Activated naive CD4-positive, alpha-beta T cell treated with anti-CD3 and anti-CD28 coated beads for 36 hours (primary cell): ENCODE measurements at regions of chr1 and their contacts with region 1.

Region 1: DNA sequence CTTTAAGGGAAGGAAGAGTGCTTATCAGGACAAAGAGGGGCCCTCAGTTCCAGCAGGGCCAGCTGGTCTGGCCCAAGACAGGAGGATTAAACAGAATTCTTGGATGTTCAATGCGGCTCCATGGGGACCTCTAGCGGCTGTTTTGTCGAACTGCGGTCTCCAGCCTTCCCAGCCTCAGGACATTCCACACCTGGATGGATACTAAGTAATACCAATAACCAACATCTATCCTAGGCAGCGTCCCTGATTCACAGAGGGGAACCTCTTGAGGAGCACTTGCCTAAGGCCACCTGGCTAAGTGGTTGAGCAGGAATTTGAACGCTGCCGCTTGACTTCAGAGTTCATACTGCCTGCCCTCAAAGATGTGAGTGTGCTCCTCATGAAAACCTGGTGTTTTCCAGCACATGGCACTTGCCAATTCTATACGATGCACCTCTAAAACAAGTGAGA is 15.5 kb upstream of the CD247 start:
- DNase-seq: peak; percentile 78
- H3K4me3 Mint-ChIP-seq: no peak overlapping the region
- H3K27ac Mint-ChIP-seq: no peak overlapping the region
- H3K4me1 Mint-ChIP-seq: peaks cover 4% of the 10 kb centered on the region
- H3K27me3 Mint-ChIP-seq: peaks cover 2% of the 10 kb centered on the region

Region 2: DNA sequence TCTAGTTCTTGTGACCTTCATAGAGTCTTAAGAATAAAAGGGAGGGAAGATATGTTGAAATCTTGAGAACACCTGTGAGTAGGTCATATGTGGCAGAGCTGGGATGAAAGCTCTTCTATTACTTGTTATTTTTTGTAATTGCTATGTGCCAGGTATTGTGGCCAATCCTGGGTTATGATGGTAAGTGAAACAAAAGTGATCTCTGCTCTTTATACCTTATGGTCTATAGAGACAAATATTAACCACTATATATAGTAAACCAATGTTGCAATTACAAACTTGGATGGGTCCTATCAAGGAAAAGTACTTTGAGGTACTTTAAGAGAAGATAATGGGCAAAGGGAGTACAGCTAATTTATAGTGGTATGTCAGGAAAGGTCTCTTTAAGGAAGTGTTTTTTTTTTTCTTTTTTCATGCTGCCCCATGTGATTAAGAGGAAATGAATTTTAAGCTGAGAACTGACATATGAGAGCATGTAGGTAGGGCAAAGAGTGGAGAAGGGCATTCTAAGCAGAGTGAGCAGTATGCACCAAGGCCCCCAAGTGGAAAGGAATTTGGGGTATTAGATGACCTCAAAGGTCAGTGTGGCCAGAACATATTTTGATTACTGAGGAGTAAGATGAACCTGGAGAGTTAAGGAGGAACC is 269.9 kb before region 1 on chr1:
- CTCF ChIA-PET with region 1: interaction called, 74 read pairs
- intact Hi-C with region 1: loop called (anchors 1 kb)
- DNase-seq: no peak
- H3K4me3 Mint-ChIP-seq: no peak overlapping the region
- H3K27ac Mint-ChIP-seq: no peak overlapping the region
- H3K4me1 Mint-ChIP-seq: peaks cover 20% of the 10 kb centered on the region
- H3K27me3 Mint-ChIP-seq: no peaks in the 10 kb centered on the region

Region 3: GRCh38 chr1:167409183-167409582 is 124.7 kb before region 1 on chr1:
- CTCF ChIA-PET with region 1: interaction called, 13 read pairs
- intact Hi-C with region 1: no loop called
- DNase-seq: no peak
- H3K4me3 Mint-ChIP-seq: no peak overlapping the region
- H3K27ac Mint-ChIP-seq: no peak overlapping the region
- H3K4me1 Mint-ChIP-seq: peaks cover 15% of the 10 kb centered on the region
- H3K27me3 Mint-ChIP-seq: no peaks in the 10 kb centered on the region

Region 4: DNA sequence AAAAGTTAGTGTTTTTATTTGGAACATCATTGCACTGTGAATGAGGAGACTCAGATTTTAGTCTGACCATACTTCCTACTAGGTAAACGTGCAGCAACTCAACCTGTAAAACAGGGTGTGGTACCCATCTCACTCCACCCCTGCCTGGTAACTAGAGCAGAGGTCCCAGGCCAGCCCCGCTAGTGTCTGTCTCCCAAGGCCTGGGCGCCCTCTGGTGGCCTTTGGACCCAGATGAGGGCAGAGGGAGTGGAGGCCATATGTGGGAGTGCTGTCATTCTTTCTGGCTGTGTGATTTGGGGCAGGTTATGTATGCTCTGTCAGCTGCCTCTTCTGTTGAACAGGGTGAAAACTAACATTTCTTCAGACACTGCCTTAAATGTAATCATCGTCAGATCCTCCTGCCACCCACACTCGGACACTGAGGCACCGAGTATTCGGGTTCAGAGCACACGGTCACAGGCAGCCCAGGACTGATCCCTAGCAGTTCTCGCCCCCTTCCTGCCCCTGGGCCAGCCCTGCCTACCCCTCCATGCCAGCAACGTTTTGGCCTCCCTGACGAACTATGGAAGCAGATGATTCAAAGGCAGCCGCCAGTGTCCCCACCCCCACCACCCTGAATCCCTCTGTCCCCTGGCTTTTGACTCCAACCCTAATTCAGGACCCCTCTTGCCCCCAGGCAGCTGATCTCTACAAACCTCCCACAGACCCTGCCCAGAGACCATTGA is 91.6 kb before region 1 on chr1:
- CTCF ChIA-PET with region 1: interaction called, 61 read pairs
- intact Hi-C with region 1: loop called (anchors 1 kb)
- DNase-seq: peak; percentile 93
- H3K4me3 Mint-ChIP-seq: no peak overlapping the region
- H3K27ac Mint-ChIP-seq: peak overlapping the region; percentile 79
- H3K4me1 Mint-ChIP-seq: peaks cover 74% of the 10 kb centered on the region
- H3K27me3 Mint-ChIP-seq: no peaks in the 10 kb centered on the region

Region 5: DNA sequence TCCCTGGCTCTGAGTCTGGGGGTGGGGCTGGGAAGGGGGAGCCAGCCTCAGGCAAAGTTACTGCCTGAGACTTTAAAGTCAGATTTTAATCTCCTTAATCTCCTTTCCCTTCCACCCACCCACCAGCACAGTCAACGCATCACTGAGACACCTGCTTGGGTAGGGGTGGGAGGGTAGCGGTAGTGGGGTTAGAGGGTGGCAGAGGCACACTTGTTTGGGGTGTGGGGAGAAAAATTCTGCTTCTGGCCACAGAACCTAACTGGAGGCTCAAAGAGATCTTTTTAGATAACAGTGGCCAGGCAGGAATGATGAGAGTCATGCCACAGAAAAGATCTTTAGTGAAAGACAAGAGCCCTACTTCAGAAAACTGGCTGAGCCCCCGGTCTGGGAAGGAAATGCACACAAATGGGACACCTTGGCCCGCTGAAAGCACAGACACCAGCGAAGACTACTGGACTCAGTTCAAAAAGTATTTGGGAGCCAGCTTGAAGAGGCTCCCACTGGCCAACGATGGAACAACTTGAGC is 59.6 kb before region 1 on chr1:
- CTCF ChIA-PET with region 1: interaction called, 11 read pairs
- intact Hi-C with region 1: no loop called
- DNase-seq: peak; percentile 48
- H3K4me3 Mint-ChIP-seq: peak overlapping the region; percentile 63
- H3K27ac Mint-ChIP-seq: peak overlapping the region; percentile 79
- H3K4me1 Mint-ChIP-seq: peaks cover 85% of the 10 kb centered on the region
- H3K27me3 Mint-ChIP-seq: no peaks in the 10 kb centered on the region

Region 6: DNA sequence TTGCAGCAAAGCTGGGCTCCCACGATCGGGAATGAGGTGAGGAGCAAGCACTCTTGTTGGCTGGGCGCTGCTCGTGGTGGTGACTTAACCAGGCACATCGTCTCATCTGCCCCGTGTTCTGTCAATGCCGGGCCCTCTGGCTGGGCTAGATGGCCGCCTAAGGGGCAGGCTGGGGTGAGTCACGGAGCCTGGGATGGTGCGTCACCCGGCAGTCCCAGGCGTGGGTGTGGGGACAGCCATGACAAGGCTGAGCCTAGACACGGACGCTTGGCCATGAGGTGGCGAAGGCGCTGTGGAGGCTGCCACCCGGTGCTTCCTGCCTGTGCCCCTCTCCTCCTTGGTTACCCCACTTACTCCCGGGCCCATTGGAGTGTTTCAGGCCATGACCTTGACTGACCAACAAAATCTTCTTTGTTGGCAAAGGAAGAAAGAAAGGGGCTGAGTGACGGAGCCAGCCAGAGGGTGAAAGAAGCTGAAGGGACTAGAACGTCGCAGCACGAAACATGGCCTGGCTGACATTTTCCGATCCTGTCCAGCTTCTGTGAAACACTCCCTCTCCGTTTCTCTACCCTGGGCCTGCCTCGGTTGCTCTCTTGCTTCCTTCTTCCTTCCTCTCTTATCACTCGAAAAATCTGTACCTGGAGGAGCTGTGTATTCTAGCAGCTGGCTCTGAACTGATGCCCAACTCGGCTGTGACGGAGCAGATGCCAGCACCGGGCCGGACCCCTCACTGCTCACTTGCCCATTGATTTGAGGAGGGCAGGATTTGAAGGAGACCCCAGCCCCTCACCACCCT is 16.1 kb before region 1 on chr1:
- CTCF ChIA-PET with region 1: interaction called, 56 read pairs
- intact Hi-C with region 1: no loop called
- DNase-seq: peak; percentile 95
- H3K4me3 Mint-ChIP-seq: peak overlapping the region; percentile 90
- H3K27ac Mint-ChIP-seq: peak overlapping the region; percentile 96
- H3K4me1 Mint-ChIP-seq: peaks cover 25% of the 10 kb centered on the region
- H3K27me3 Mint-ChIP-seq: no peaks in the 10 kb centered on the region

Region 7: DNA sequence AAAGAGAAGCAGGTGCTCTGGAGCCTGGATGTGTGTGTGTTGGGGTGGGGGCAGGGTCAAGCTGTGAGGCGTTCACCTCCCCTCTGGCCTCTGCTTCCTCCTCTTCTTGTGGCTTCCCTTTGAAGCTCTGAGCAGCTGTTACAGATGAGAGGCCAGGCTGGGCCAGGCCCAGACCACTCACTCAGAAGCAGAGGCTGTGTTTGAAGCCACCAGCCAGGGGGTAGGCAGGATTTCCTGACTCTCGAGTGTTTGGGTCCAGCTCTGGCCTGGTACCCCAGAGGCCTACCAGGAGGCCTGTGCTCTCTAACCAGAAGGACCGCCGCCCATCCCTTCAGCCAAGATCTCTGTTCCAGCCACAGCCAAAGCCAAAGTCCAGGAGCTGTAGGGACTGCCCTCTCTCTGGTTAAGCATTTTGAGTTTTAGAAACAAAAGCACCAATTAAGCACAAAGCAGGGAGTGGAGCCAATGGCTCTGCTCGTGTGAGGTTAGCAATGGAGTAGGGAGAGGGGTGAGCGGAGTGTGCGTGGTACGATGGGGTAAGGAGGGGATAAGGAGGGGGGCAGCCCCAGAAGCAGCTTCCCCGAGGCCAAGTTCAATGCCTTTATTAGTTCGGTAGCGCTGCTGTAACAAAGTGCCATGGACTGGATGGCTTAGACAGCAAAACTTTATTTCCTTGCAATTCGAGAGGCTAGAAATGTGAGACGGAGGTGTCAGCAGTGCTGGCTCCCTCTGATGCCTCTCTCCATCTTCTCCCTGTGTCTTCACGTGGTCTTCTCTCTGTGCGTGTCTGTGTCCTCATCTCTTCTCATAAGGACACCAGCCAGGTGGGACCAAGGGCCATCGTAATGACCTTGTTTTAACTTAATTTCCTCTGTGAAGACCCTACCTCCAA is 116.6 kb after region 1 on chr1:
- CTCF ChIA-PET with region 1: no interaction called
- intact Hi-C with region 1: no loop called
- DNase-seq: peak; percentile 39
- H3K4me3 Mint-ChIP-seq: peak overlapping the region; percentile 13
- H3K27ac Mint-ChIP-seq: peak overlapping the region; percentile 55
- H3K4me1 Mint-ChIP-seq: peaks cover 84% of the 10 kb centered on the region
- H3K27me3 Mint-ChIP-seq: no peaks in the 10 kb centered on the region

Region 8: DNA sequence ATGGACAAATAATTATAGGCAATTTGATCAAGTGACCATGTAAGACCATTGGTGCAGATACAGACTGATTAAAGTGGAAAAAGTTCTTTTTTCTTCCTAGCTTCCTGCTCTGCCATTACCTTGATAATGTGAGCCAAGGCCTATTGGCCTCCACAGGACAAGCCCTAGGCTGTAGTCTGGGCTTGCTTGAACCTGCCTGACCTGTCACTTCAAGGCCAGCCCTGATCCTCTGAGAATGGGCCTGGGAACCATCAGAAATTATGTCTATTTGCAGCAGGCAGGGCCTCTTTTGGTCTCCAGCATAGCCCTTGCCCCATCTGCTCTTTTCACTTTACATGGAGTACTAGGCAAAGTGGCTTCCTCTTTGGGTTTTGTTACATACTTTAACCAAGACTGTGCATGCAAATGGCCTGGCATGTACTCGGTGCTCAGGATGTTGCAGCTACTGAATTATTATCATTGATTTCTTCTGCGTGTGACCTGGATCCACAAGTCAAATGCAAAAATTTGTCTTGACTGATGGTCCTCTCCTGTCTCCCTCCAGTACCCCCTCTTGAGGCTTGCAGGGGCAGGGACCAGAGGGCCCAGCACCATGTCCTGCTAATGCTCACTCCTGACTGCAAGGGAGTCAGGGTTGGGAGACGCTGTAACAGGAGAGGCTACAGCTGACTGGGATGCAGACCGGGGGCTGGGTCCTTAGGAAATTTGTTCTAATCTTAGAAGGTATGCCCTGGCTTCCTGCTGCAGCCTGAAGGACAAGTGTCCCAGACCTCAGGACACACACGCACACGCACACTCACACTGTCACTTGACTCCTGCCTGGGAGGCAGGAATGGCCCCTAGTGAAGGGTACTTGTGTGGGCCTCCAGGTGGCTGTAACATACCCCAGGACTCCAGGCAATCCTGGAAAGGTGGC is 135.6 kb after region 1 on chr1:
- CTCF ChIA-PET with region 1: no interaction called
- intact Hi-C with region 1: no loop called
- DNase-seq: no peak
- H3K4me3 Mint-ChIP-seq: no peak overlapping the region
- H3K27ac Mint-ChIP-seq: no peak overlapping the region
- H3K4me1 Mint-ChIP-seq: peaks cover 78% of the 10 kb centered on the region
- H3K27me3 Mint-ChIP-seq: no peaks in the 10 kb centered on the region

Region 9: DNA sequence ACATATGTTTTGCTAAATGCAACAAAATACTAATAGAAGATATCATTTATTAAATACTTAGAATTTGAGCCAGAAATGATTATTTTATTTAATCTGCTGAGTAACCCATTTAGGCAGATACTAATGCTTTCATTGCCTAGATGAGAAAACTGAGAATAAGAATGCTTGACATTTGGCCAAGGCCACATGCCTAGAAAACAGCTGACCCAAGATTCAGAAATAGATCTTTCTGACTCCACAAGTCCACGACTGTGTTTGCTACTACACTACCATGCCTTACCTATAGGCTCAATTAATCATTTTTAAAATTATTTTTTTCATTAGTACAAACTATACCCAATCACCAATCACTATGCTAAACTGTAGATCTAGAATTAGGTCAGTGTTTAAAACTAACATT is 1702.3 kb after region 1 on chr1:
- CTCF ChIA-PET with region 1: no interaction called
- intact Hi-C with region 1: no loop called
- DNase-seq: no peak
- H3K4me3 Mint-ChIP-seq: no peak overlapping the region
- H3K27ac Mint-ChIP-seq: no peak overlapping the region
- H3K4me1 Mint-ChIP-seq: peaks cover 2% of the 10 kb centered on the region
- H3K27me3 Mint-ChIP-seq: no peaks in the 10 kb centered on the region